CD8-positive, alpha-beta T cell (primary cell): ENCODE measurements at regions of chr4 and their contacts with region 1.

Region 1: DNA sequence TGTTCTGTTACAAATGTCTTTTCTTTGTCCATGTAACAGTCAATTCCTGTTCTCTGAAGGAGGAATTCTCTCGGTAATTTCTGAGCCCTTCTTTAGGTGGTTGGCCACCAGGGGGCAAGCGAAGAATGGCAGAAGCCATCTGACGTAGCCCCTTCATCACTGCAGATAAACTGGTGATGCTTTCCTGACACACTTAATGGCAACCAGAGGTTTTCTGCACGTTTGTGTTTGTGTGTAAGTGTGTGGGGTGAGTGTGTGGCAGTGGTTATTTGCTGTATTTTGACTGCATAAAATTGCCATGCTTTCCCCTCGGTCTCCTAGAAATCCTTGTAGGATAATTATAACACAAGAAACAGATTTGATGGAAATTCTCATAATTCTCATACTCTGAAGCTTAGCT is 64.8 kb upstream of the STOX2 start:
- DNase-seq: peak; percentile 12 to 71 (median 62)
- ATAC-seq: no peak
- H3K4me3 ChIP-seq: no peak overlapping the region
- H3K4me3 Mint-ChIP-seq: no peak overlapping the region
- H3K27ac ChIP-seq: no peak overlapping the region
- H3K27ac Mint-ChIP-seq: no peak overlapping the region
- H3K4me1 ChIP-seq: no peaks in the 10 kb centered on the region
- H3K4me1 Mint-ChIP-seq: no peaks in the 10 kb centered on the region
- H3K27me3 ChIP-seq: no peaks in the 10 kb centered on the region
- H3K27me3 Mint-ChIP-seq: peaks cover 27% of the 10 kb centered on the region
- CTCF ChIP-seq: peak; percentile 73

Region 2: DNA sequence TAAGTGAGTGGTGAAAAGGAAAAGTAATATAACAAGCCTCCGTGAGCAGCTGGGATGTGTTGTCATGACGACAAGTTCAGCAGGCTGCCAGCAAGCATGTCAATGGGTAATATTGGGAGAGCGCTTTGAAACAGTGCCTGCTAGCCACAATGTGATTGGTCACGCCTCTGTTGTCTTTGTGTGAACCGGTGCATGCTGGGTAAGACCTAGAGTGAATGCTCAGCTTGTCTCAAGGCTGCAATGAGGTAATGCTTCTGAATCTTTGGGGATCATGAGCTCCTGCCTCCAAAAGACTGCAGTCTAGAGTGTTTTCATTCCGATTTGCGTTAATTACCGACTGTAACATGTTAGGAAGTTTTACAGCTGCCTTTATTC is 119.7 kb after region 1 on chr4:
- CTCF ChIA-PET with region 1: no interaction called
- POLR2A ChIA-PET with region 1: no interaction called
- intact Hi-C with region 1: no loop called
- DNase-seq: no peak
- ATAC-seq: no peak
- H3K4me3 ChIP-seq: no peak overlapping the region
- H3K4me3 Mint-ChIP-seq: no peak overlapping the region
- H3K27ac ChIP-seq: no peak overlapping the region
- H3K27ac Mint-ChIP-seq: no peak overlapping the region
- H3K4me1 ChIP-seq: no peaks in the 10 kb centered on the region
- H3K4me1 Mint-ChIP-seq: no peaks in the 10 kb centered on the region
- H3K27me3 ChIP-seq: no peaks in the 10 kb centered on the region
- H3K27me3 Mint-ChIP-seq: peaks cover 6% of the 10 kb centered on the region
- CTCF ChIP-seq: no peak

Region 3: GRCh38 chr4:184100297-184100885 is 260.1 kb after region 1 on chr4:
- CTCF ChIA-PET with region 1: interaction called, 5 read pairs
- POLR2A ChIA-PET with region 1: no interaction called
- intact Hi-C with region 1: loop called (anchors 1 to 2 kb)
- DNase-seq: peak in 7 of 9 experiments; percentile 12 to 53 (median 29)
- ATAC-seq: no peak
- H3K4me3 ChIP-seq: no peak overlapping the region
- H3K4me3 Mint-ChIP-seq: no peak overlapping the region
- H3K27ac ChIP-seq: no peak overlapping the region
- H3K27ac Mint-ChIP-seq: no peak overlapping the region
- H3K4me1 ChIP-seq: no peaks in the 10 kb centered on the region
- H3K4me1 Mint-ChIP-seq: peaks cover 5% of the 10 kb centered on the region
- H3K27me3 ChIP-seq: no peaks in the 10 kb centered on the region
- H3K27me3 Mint-ChIP-seq: peaks cover 28% of the 10 kb centered on the region
- CTCF ChIP-seq: peak; percentile 49

Region 4: GRCh38 chr4:184168406-184169019 is 328.2 kb after region 1 on chr4:
- CTCF ChIA-PET with region 1: interaction called, 4 read pairs
- POLR2A ChIA-PET with region 1: no interaction called
- intact Hi-C with region 1: loop called (anchors 1 kb)
- DNase-seq: peak; percentile 12 to 64 (median 36)
- ATAC-seq: peak; percentile 44
- H3K4me3 ChIP-seq: no peak overlapping the region
- H3K4me3 Mint-ChIP-seq: no peak overlapping the region
- H3K27ac ChIP-seq: no peak overlapping the region
- H3K27ac Mint-ChIP-seq: no peak overlapping the region
- H3K4me1 ChIP-seq: peaks cover 4% of the 10 kb centered on the region
- H3K4me1 Mint-ChIP-seq: peaks cover 2% of the 10 kb centered on the region
- H3K27me3 ChIP-seq: peaks cover 0 to 7% of the 10 kb centered on the region in 2 experiments
- H3K27me3 Mint-ChIP-seq: peaks cover 63% of the 10 kb centered on the region
- CTCF ChIP-seq: peak; percentile 58

Region 5: DNA sequence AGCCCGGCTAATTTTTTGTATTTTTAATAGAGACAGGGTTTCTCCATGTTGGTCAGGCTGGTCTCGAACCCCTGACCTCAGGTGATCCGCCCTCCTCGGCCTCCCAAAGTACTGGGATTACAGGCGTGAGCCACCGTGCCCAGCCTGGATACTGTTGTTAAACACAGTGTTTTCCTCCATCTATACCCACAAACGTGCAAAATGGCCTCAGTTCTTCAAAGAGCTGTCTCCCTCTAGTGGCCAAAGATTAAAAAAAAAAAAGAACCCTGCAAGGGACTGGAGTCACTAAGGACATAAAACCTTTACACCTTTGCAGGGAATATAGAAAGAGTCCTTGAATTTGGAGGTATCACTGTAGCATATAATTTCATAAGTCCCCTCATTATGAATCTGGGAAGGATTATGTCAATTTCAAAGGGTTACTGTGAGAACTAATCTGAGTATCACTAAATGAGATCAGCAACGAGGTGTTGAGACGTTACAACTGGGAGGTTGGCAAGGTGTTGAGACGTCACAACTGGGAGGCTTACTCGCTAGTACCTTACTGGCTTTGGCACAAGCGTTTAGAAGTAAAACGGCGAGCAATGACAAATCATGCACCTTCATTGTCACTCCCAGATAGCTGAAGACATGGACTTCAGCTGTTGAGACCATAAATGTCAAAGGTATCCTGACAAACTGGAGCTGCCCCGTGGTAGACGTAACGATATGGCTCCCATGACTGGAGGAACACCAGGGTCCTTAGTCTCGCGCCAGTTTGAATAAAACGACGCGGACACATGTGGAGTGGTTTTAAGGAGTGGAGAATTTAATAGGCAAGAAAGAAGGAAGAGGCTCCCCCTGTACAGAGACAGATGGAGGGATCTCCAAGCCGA is 410.7 kb after region 1 on chr4:
- CTCF ChIA-PET with region 1: interaction called, 5 read pairs
- POLR2A ChIA-PET with region 1: no interaction called
- intact Hi-C with region 1: loop called in 1 of 2 experiments (anchors 2 kb)
- DNase-seq: peak in 3 of 9 experiments; percentile 48 to 75 (median 67)
- ATAC-seq: peak; percentile 79
- H3K4me3 ChIP-seq: no peak overlapping the region
- H3K4me3 Mint-ChIP-seq: no peak overlapping the region
- H3K27ac ChIP-seq: no peak overlapping the region
- H3K27ac Mint-ChIP-seq: no peak overlapping the region
- H3K4me1 ChIP-seq: no peaks in the 10 kb centered on the region
- H3K4me1 Mint-ChIP-seq: peaks cover 2% of the 10 kb centered on the region
- H3K27me3 ChIP-seq: no peaks in the 10 kb centered on the region
- H3K27me3 Mint-ChIP-seq: peaks cover 6% of the 10 kb centered on the region
- CTCF ChIP-seq: peak; percentile 79

Region 6: DNA sequence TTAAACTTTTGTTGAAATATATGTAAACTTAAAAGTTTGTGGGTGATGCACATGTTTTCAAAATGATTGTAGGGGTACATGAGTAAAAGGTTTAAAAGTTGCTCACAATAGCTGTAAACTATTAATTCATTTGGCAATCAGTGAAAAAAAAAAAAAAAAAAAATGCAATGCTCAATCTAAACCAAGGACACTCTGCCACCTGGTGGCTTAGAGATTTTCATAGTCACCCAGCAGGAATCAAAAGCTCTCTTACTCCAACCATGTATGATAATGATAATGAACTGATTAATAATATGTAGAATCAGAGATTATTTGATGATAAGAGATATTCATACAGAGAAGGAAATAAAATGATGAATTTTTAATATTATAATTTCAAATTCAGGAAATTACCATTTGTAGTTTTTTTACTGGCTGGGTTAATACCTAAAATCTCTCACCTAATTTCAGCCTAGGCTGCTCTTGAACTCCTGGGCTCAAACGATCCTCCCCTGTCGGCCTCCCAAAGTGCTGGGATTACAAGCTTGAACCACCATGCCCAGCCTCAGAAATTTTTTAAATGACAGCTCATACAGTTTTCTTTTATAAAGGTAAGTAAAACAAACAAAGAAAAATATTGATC is 1255.8 kb after region 1 on chr4:
- CTCF ChIA-PET with region 1: no interaction called
- POLR2A ChIA-PET with region 1: no interaction called
- intact Hi-C with region 1: loop called (anchors 2 to 5 kb)
- DNase-seq: peak in 5 of 9 experiments; percentile 20 to 48 (median 24)
- ATAC-seq: no peak
- H3K4me3 ChIP-seq: no peak overlapping the region
- H3K4me3 Mint-ChIP-seq: no peak overlapping the region
- H3K27ac ChIP-seq: no peak overlapping the region
- H3K27ac Mint-ChIP-seq: no peak overlapping the region
- H3K4me1 ChIP-seq: no peaks in the 10 kb centered on the region
- H3K4me1 Mint-ChIP-seq: no peaks in the 10 kb centered on the region
- H3K27me3 ChIP-seq: peaks cover 0 to 2% of the 10 kb centered on the region in 2 experiments
- H3K27me3 Mint-ChIP-seq: peaks cover 17% of the 10 kb centered on the region
- CTCF ChIP-seq: peak; percentile 59